ENCODE measurements at regions of chr13 and their contacts with region 1.

Region 1: DNA sequence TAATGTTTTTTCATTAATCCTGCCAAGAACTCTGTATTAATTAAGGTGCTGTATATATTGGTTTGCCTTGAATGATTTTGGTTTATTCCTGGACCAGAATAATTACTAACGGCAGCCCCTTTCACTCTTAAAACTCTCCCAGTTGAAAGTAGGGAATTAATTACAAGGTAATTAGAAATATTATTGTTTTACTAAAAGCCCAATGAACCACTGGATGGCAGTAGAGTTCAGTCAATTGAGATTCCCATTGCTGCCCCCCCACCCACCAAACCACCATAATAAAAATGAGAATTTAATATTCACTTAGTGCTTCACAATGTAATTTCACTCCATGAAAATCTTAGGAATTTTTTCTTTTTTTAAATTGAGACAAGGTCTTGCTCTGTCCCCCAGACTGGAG is 13.7 kb downstream of the WBP4 start:
- DNase-seq: no peak
- H3K4me3 ChIP-seq: no peak overlapping the region
- H3K27ac ChIP-seq: no peak overlapping the region
- H3K4me1 ChIP-seq: no peaks in the 10 kb centered on the region
- H3K27me3 ChIP-seq: no peaks in the 10 kb centered on the region
- CTCF ChIP-seq: no peak

Region 2: DNA sequence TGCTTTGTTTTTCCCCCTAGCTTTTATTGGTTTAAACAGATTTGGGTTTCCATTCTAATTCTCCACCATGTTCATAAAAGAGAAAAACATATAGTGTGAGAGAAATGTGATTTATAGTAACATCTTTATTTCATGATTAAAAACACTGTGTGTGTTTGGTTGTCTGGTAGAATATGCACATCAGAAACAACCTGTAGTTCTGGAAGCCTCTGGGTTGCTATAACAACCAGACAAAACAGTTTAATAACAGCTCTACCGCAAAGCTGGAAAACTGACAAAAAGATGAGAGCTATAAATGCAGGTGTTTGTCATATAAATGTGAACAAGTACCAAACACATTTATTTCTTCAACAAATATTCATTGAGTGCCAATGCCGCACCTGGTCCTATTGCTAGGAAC is 47.8 kb after region 1 on chr13:
- intact Hi-C with region 1: loop called (anchors 10 kb)
- DNase-seq: no peak
- H3K4me3 ChIP-seq: no peak overlapping the region
- H3K27ac ChIP-seq: no peak overlapping the region
- H3K4me1 ChIP-seq: no peaks in the 10 kb centered on the region
- H3K27me3 ChIP-seq: no peaks in the 10 kb centered on the region
- CTCF ChIP-seq: no peak

Region 3: DNA sequence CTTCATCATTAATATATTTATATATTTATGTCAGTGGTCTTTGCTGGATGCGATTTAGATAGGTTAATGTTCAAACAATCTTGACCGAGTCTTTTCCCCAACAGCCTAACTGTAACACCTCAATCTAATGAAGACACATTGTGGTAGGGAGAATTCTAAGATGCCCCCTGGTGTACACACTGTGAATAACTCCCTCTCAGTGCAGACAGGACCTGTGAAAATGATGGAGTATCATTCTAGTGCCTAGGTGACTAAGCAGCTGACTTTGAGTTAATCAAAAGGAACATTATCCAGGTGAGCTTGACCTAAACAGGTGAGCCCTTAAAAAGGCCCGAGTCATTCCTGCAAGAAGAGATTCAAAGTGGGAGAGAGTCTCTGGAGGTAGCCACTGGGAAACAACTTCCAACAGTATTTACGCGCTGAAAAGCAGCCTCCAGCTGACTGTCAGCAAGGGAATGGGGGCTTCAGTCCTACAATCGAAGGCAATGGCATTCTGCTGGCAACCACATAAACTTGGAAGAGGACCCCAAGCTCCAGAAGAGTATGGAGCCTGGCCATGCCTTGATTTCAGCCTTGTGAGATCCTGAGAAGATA is 147.3 kb after region 1 on chr13:
- intact Hi-C with region 1: loop called (anchors 2 kb)
- DNase-seq: peak; percentile 56
- H3K4me3 ChIP-seq: no peak overlapping the region
- H3K27ac ChIP-seq: no peak overlapping the region
- H3K4me1 ChIP-seq: no peaks in the 10 kb centered on the region
- H3K27me3 ChIP-seq: no peaks in the 10 kb centered on the region
- CTCF ChIP-seq: peak; percentile 73